ENCODE measurements at regions of chr11 and their contacts with region 1.

Region 1: GRCh38 chr11:68946465-68947036 is 34.2 kb downstream of the MRGPRD start:
- DNase-seq: peak in 4 of 5 donors; percentile 50 to 75 (median 57)
- H3K4me3 ChIP-seq: peak overlapping the region; percentile 30
- H3K27ac ChIP-seq: peak overlapping the region in 1 of 2 donors; percentile 44
- H3K4me1 ChIP-seq: peaks cover 9% of the 10 kb centered on the region
- H3K27me3 ChIP-seq: no peaks in the 10 kb centered on the region
- CTCF ChIP-seq: no peak
- EP300 ChIP-seq: no peak
- POLR2A ChIP-seq: no peak

Region 2: DNA sequence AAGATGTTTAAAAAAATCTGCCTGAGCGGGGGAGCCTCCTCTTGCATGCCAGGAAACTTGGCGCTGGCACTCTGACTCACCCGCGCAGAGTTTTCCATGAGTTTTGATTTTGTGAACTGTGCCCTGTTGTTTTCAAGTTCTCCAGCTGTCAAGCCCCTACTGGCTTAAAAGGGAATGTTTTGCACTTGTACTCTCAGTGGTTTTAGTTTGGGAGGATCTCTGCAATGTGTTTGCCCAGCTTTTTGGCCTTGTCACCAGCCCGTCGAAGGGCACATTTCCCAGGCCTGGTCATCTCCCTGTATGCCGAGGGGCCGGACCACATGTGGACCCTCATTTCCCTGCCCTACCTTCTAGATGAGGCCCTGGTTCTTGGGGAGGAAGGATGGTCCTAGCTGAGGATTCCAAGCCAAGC is 54.3 kb after region 1 on chr11:
- intact Hi-C with region 1: loop called in 1 of 4 experiments (anchors 10 kb)
- DNase-seq: peak; percentile 68 to 83 (median 77)
- H3K4me3 ChIP-seq: no peak overlapping the region
- H3K27ac ChIP-seq: peak overlapping the region; percentile 23 to 83
- H3K4me1 ChIP-seq: peaks cover 29% of the 10 kb centered on the region
- H3K27me3 ChIP-seq: no peaks in the 10 kb centered on the region
- CTCF ChIP-seq: peak; percentile 56 to 79 (median 77)
- EP300 ChIP-seq: no peak
- POLR2A ChIP-seq: peak; percentile 27

Region 3: GRCh38 chr11:70717936-70718595 is 1771.5 kb after region 1 on chr11:
- intact Hi-C with region 1: no loop called
- DNase-seq: no peak
- H3K4me3 ChIP-seq: no peak overlapping the region
- H3K27ac ChIP-seq: no peak overlapping the region
- H3K4me1 ChIP-seq: no peaks in the 10 kb centered on the region
- H3K27me3 ChIP-seq: no peaks in the 10 kb centered on the region
- CTCF ChIP-seq: no peak
- EP300 ChIP-seq: no peak
- POLR2A ChIP-seq: no peak